Cardiac septum (tissue), 1 donor: ENCODE measurements at regions of chr5 and their contacts with region 1.

Region 1: GRCh38 chr5:116652196-116652729 is 77.6 kb upstream of the SEMA6A start:
- DNase-seq: peak; percentile 79

Region 2: GRCh38 chr5:116766470-116766947 is 114.2 kb after region 1 on chr5:
- intact Hi-C with region 1: loop called (anchors 10 kb)
- DNase-seq: no peak